Colonic mucosa (tissue), 4 donors: ENCODE measurements at regions of chr18 and their contacts with region 1.

Region 1: DNA sequence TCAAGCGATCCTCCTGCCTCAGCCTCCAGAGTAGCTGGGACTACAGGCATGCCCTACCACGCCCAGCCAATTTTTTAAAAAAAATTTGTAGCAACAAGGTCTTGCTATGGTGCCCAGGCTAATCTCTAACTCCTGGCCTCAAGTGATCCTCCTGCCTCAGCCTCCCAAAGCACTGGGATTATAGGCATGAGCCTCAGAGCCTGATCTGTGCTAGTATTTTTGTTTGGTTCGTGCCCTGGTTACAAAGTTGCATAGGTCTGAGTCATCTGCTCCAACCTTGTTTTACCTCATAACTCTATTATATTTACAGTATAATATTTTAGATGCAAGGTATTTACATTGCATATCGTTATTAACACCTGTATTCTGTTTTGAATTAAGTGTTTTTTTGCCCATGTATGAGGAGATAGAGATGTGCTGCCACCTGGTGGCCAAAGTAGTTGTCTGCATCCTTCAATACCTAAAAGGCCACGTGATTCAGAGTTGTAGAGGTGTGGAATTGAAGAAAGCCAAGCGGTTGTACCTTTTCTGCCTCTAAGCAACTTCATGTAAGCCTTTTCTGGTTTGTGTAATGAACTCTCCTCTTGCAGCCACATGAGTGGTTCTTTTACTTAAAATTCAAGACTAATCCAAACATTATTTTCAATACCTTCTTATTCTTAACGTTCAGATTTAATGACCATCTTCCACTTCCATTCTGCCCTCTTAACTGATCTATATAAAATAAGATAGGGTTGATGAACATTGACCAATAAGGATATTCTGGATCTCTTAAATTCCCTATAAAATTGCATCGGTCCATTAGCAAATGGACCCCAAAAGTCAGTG is 19.9 kb upstream of the CABYR start:
- DNase-seq: peak; percentile 77
- H3K4me3 ChIP-seq: no peak overlapping the region
- H3K27ac ChIP-seq: no peak overlapping the region
- H3K4me1 ChIP-seq: no peaks in the 10 kb centered on the region
- H3K27me3 ChIP-seq: no peaks in the 10 kb centered on the region
- CTCF ChIP-seq: peak; percentile 92

Region 2: DNA sequence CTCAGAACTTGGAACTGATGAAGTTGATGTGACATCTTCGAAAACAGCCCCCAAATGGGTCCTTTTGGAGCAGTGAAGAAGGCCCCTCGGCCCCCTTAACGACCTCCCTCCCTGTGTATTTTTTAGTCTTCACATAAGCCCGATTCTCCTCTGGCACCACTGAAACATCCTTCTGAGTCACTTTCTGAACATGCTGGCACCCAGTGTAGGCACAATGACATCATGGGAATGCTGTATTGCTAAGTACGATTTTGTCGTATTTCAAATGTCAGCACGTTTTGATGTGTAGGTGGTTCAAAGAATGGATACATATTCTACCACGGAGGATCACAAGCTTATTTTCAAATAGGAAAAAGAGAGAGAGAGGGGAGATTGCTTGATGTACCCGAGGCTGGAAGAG is 777.6 kb before region 1 on chr18:
- intact Hi-C with region 1: no loop called
- DNase-seq: no peak
- H3K4me3 ChIP-seq: no peak overlapping the region
- H3K27ac ChIP-seq: no peak overlapping the region
- H3K4me1 ChIP-seq: no peaks in the 10 kb centered on the region
- H3K27me3 ChIP-seq: no peaks in the 10 kb centered on the region
- CTCF ChIP-seq: no peak

Region 3: DNA sequence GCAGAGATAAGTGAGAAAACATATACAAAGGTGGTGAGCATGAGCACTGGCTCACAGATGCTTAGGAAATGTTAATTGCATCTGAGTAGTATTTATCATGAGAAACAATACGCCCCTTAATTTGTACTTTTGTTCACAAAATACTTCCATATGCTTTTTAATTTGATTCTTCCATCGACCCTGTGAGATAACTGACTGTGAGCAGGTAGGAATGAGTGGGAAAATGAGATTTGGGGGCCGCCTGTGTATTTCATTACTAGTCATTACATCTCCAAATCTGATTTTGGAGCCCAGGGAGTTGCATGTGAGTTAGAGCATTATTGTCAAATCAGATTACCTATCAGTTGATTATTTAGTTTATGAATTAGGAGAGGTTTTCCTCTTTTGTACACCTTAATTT is 495.9 kb before region 1 on chr18:
- intact Hi-C with region 1: loop called (anchors 5 kb)
- DNase-seq: no peak
- H3K4me3 ChIP-seq: no peak overlapping the region
- H3K27ac ChIP-seq: no peak overlapping the region
- H3K4me1 ChIP-seq: peaks cover 11% of the 10 kb centered on the region
- H3K27me3 ChIP-seq: peaks cover 11% of the 10 kb centered on the region
- CTCF ChIP-seq: no peak

Region 4: DNA sequence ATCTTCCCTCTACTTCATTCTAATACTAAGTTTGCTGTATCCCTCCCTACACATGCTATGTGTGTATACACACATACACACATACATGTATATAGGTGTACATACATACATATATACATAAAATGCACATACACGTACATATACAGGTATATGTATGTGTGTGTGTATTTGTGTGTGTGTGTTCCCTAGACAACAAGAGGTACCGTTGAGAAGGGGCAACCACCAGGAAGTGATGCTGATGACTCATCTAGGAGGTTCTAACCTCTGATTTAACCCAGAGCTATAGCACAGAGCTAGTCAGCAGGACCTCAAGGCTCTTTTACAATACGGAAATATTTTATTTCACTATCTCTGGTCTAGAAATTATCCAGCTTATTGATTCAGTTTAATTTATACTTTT is 290.5 kb before region 1 on chr18:
- intact Hi-C with region 1: loop called (anchors 10 kb)
- DNase-seq: no peak
- H3K4me3 ChIP-seq: no peak overlapping the region
- H3K27ac ChIP-seq: no peak overlapping the region
- H3K4me1 ChIP-seq: no peaks in the 10 kb centered on the region
- H3K27me3 ChIP-seq: no peaks in the 10 kb centered on the region
- CTCF ChIP-seq: no peak

Region 5: GRCh38 chr18:23924813-23925212 is 194.2 kb before region 1 on chr18:
- intact Hi-C with region 1: loop called (anchors 10 kb)
- DNase-seq: no peak
- H3K4me3 ChIP-seq: no peak overlapping the region
- H3K27ac ChIP-seq: no peak overlapping the region
- H3K4me1 ChIP-seq: no peaks in the 10 kb centered on the region
- H3K27me3 ChIP-seq: no peaks in the 10 kb centered on the region
- CTCF ChIP-seq: no peak

Region 6: GRCh38 chr18:23967321-23968089 is 151.5 kb before region 1 on chr18:
- intact Hi-C with region 1: loop called (anchors 10 kb)
- DNase-seq: no peak
- H3K4me3 ChIP-seq: no peak overlapping the region
- H3K27ac ChIP-seq: no peak overlapping the region
- H3K4me1 ChIP-seq: no peaks in the 10 kb centered on the region
- H3K27me3 ChIP-seq: no peaks in the 10 kb centered on the region
- CTCF ChIP-seq: no peak